GM13977 (cell line): ENCODE measurements at regions of chr9 and their contacts with region 1.

Region 1: DNA sequence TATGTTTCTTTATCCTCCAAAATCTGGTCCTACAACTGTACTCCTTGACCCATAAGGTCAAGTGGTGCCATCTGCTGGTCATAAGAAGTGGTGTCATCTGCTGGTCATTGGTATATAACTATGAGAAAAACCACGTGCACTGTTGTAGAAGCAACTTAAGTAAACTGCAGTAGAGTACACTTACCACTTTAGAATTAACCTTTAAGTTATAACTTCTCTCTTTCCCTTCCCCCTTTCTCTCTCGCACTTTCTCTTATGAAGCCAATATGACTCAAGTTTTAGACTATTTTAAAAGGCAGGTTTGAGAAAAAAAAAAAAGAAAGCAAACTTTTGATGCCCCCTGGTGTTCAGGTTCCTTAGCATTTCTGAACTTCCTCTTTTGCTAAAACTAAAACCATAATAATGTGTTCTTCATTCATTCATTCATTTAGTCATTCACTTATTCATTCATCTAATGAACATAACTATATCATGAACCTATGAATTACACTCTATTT is 12.8 kb upstream of the MTAP start:
- DNase-seq: peak; percentile 50
- CTCF ChIP-seq: peak; percentile 74

Region 2: GRCh38 chr9:21317956-21318923 is 471.3 kb before region 1 on chr9:
- in situ Hi-C with region 1: loop called (anchors 25 kb)
- DNase-seq: no peak
- CTCF ChIP-seq: peak; percentile 77

Region 3: GRCh38 chr9:21465859-21466518 is 323.6 kb before region 1 on chr9:
- in situ Hi-C with region 1: loop called (anchors 5 kb)
- DNase-seq: peak; percentile 44
- CTCF ChIP-seq: peak; percentile 71

Region 4: GRCh38 chr9:21616082-21616778 is 173.4 kb before region 1 on chr9:
- in situ Hi-C with region 1: no loop called
- DNase-seq: no peak
- CTCF ChIP-seq: no peak